GM10248 (cell line): ENCODE measurements at regions of chr7 and their contacts with region 1.

Region 1: GRCh38 chr7:97835296-97836138 is 36.7 kb downstream of the ASNS start:
- DNase-seq: peak; percentile 41
- CTCF ChIP-seq: peak; percentile 70

Region 2: DNA sequence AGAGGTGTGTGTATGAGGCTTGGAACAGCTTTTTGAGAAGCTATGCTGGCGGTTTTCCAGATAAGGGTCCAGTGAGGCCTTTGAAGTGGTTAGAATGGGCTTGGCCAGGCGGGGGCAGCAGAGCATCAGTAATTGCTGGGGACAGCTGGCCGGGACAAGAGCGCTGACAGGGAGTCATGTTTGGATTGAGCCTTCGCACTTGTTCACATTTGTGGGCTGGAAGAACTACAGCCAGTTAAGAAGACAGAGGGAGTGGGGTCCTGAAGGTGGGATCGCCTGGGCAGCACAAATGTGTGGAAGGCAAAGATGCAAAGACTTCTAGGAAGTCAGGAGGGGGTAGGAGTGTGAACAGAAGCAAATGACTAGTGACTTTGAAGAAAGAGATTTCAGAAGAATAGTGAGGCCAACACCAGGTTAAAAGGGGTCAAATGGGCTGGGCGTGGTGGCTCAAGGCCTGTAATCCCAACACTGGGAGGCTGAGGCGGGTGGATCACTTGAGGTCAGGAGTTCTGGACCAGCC is 730.7 kb before region 1 on chr7:
- CTCF ChIA-PET with region 1: interaction called, 34 read pairs
- POLR2A ChIA-PET with region 1: no interaction called
- DNase-seq: peak; percentile 71
- CTCF ChIP-seq: peak; percentile 91

Region 3: DNA sequence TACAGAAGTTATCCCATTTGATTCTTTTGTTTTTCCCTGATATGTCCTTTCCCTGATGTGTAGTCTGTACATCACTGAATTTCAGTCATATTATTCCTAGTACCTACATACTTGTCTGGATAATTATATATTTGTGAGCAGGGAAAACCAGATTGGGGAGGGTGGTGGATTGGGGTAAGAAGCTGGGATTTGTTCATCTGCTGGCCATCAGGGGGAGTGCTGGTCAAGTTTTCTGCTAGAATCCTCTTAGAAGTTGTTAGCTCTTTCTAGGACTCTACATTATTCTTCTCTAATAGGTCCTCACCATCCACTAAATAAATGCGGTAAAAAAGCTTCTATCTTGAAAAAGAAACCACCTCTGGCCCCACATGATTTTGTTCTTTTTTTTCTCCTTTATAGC is 336.3 kb before region 1 on chr7:
- CTCF ChIA-PET with region 1: interaction called, 53 read pairs
- POLR2A ChIA-PET with region 1: no interaction called
- DNase-seq: peak; percentile 40
- CTCF ChIP-seq: peak; percentile 41

Region 4: GRCh38 chr7:97819161-97819560 is 16.4 kb before region 1 on chr7:
- CTCF ChIA-PET with region 1: interaction called, 23 read pairs
- POLR2A ChIA-PET with region 1: no interaction called
- DNase-seq: no peak
- CTCF ChIP-seq: no peak

Region 5: GRCh38 chr7:97845622-97846203 is 10.2 kb after region 1 on chr7:
- CTCF ChIA-PET with region 1: interaction called, 51 read pairs
- POLR2A ChIA-PET with region 1: no interaction called
- DNase-seq: no peak
- CTCF ChIP-seq: peak; percentile 37

Region 6: GRCh38 chr7:97857544-97857943 is 22.0 kb after region 1 on chr7:
- CTCF ChIA-PET with region 1: interaction called, 13 read pairs
- POLR2A ChIA-PET with region 1: no interaction called
- DNase-seq: no peak
- CTCF ChIP-seq: no peak